Activated B cell treated with CpG ODN at 0.5 μM for 24 hours (primary cell): ENCODE measurements at regions of chr2 and their contacts with region 1.

Region 1: GRCh38 chr2:109128048-109128465 is 948 bp upstream of the SH3RF3 start:
- DNase-seq: peak; percentile 53
- ATAC-seq: peak; percentile 60
- H3K4me3 Mint-ChIP-seq: peak overlapping the region; percentile 80
- H3K27ac Mint-ChIP-seq: no peak overlapping the region
- H3K4me1 Mint-ChIP-seq: peaks cover 15% of the 10 kb centered on the region
- H3K27me3 Mint-ChIP-seq: peaks cover 24% of the 10 kb centered on the region
- CTCF ChIP-seq: peak; percentile 20

Region 2: DNA sequence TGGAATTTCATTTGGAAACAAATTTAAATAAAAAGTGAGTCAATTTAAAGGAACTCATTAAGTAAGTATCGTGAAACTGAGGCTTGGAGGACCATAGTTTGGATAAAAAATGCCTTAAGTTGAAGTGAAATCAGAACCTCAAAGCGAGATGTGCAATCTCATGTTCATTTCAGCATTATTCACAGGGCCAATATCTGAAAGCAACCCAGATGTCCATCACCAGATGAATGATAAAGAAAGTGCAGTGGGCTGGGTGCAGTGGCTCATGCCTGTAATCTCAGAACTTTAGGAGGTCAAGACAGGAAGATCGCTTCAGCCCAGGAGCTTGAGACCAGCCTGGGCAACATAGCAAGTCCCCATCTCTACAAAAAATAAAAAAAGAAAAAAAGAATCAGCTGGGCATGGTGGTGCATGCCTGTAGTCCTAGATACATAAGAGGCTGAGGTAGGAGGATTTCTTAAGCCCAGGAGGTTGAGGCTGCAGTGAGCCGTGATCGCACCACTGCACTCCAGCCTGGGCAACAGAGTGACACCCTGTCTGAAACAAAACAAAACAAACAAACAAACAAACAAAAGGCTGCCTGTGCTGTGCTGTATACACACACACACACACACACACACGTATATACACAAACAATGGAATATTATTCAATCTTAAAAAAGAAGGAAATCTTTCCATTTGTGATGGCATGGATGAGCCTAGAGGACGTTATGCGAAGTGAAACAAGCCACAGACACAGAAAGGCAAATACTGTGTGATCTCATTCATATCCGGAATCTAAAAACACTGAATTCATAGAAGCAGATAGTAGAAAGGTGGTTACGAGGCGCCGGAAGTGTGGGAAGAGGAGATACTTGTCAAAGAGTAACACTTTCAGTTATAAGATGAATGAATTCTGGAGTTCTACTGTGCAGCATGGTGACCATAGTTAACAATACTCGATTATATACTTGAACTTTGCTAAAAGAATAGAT is 15.4 kb after region 1 on chr2:
- CTCF ChIA-PET with region 1: no interaction called
- POLR2A ChIA-PET with region 1: no interaction called
- intact Hi-C with region 1: no loop called
- DNase-seq: no peak
- ATAC-seq: no peak
- H3K4me3 Mint-ChIP-seq: peak overlapping the region; percentile 0
- H3K27ac Mint-ChIP-seq: no peak overlapping the region
- H3K4me1 Mint-ChIP-seq: peaks cover 7% of the 10 kb centered on the region
- H3K27me3 Mint-ChIP-seq: no peaks in the 10 kb centered on the region
- CTCF ChIP-seq: no peak

Region 3: DNA sequence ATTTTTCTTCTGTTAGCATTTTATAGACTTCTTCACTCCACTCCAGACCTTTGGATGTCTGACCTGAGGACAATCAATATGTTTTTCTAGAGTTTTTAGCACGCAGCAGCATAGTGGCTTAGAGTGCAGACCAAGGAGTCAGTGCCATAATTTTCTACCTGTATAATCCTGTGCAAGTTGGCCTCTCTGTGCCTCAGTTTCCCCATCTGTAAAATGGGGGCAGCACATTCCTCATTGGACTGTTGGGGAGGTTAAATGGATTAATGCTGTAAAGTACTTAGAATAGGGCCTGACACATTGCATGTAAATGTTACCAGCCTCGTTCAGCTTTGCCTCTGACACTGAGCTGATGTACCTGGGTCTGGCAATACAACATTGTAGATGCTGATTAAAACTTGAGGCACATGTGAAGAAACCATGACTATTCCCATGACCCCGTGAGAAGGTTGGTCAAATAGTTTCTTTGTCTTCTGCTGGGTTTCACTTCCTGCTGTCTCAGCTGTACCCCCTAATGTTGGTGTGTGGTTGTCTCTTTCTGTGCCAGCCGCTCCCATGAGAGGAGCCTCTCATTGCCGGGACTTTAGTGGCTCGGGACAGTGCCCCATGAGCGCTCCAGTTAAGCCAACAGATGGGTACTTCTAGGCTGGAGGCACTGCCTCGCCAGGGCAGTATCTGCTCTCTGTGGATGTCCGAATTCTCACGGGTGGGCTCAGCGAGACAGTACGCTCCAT is 126.3 kb after region 1 on chr2:
- CTCF ChIA-PET with region 1: no interaction called
- POLR2A ChIA-PET with region 1: no interaction called
- intact Hi-C with region 1: loop called (anchors 10 kb)
- DNase-seq: no peak
- ATAC-seq: peak; percentile 73
- H3K4me3 Mint-ChIP-seq: peak overlapping the region; percentile 50
- H3K27ac Mint-ChIP-seq: peak overlapping the region; percentile 51
- H3K4me1 Mint-ChIP-seq: peaks cover 45% of the 10 kb centered on the region
- H3K27me3 Mint-ChIP-seq: no peaks in the 10 kb centered on the region
- CTCF ChIP-seq: no peak

Region 4: GRCh38 chr2:109331896-109332848 is 204.1 kb after region 1 on chr2:
- CTCF ChIA-PET with region 1: no interaction called
- POLR2A ChIA-PET with region 1: no interaction called
- intact Hi-C with region 1: loop called (anchors 10 kb)
- DNase-seq: no peak
- ATAC-seq: peak; percentile 47
- H3K4me3 Mint-ChIP-seq: peak overlapping the region; percentile 80
- H3K27ac Mint-ChIP-seq: peak overlapping the region; percentile 27
- H3K4me1 Mint-ChIP-seq: peaks cover 42% of the 10 kb centered on the region
- H3K27me3 Mint-ChIP-seq: no peaks in the 10 kb centered on the region
- CTCF ChIP-seq: no peak

Region 5: DNA sequence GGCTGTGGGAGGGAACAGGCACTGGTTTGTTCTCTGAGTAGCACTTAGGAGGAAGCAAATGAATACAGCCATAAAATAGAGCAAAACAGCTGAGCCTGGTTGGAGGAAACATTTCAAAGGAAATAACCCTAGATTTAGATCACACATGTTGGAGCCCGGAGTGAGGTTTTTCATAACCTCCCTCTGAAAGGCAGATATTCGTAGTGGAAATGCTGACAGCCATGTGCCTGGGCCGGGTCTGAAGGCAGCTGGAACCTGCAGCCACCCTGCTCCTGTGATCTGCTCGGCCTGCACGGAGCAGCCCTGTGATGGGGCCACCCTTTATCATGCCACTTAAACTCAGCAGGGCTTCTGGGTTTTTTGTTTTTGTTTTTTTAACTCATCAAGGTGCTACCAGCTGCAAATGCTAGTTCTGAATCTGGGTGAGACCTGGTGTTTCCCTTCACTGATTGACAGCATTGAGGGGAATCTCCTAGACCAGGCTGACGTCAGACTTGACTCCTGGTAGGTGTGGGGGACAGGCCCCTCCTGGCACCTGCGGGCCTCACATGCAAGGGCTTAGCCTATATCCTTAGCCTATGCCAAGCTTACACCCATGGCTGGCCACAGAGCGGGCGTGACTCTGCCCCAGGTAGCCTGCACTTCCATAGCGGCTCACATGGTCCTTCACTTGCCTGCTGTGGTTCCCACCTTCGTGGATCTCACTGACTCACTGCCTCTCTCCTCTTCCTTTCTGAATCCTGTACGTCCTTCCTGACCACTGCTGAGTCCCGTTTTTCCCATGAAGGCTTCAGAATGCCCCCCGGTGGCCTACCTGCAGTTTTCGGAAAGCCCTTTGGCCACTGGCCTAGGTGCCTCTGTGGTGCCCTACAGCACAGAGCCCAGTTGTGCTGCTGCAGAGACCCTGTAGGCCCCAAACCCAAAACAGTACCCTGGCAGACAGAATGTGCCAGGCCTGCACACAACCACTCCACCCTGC is 268.4 kb after region 1 on chr2:
- CTCF ChIA-PET with region 1: no interaction called
- POLR2A ChIA-PET with region 1: no interaction called
- intact Hi-C with region 1: no loop called
- DNase-seq: no peak
- ATAC-seq: no peak
- H3K4me3 Mint-ChIP-seq: no peak overlapping the region
- H3K27ac Mint-ChIP-seq: no peak overlapping the region
- H3K4me1 Mint-ChIP-seq: no peaks in the 10 kb centered on the region
- H3K27me3 Mint-ChIP-seq: no peaks in the 10 kb centered on the region
- CTCF ChIP-seq: no peak

Region 6: DNA sequence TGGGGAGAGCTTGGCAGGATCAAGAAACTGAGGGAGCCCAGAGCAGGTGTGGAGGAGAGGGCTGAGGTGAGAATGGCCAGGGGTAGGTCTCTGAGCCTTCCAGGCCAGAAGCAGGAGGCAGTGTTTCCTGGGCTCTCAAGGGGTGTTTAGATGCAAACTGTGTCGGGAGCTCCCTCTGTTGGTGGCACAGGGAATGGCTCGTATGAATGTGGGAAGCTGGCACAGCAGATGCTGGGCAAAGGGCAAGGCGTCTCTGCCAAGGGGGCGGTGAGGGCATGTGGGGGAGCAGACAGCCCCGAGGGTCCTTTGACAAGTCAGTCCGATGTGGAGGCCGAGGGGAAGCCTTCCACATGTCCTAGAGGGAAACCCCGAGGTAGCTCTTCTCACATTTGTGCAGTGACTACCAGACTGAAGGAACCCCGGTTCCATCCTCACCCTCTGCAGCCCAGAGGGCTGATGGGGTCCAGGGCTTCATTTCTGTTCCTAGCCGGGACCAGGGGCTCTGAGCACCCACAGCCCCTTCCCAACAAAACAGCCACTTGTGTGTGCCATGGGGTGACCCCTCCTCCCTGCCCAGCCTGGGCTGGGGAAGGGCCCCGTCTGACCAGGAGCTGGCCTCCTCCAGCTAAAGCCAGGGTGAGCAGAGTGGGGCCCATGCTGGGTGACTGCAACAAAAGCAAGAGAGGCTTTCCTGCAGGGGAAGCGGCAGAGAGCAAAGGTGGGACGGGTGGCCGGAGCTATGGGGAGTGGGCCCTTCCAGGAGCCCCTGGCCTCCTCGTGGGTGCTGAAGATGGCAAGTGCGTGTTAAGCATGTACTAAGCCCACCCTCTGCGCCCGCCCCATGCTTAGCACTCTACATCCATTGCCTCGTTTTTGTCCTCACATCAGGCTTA is 382.3 kb after region 1 on chr2:
- CTCF ChIA-PET with region 1: interaction called, 62 read pairs
- POLR2A ChIA-PET with region 1: interaction called, 4 read pairs
- intact Hi-C with region 1: no loop called
- DNase-seq: peak; percentile 59
- ATAC-seq: peak; percentile 77
- H3K4me3 Mint-ChIP-seq: no peak overlapping the region
- H3K27ac Mint-ChIP-seq: no peak overlapping the region
- H3K4me1 Mint-ChIP-seq: no peaks in the 10 kb centered on the region
- H3K27me3 Mint-ChIP-seq: peaks cover 4% of the 10 kb centered on the region
- CTCF ChIP-seq: no peak